Activated naive CD4-positive, alpha-beta T cell treated with anti-CD3 and anti-CD28 coated beads for 36 hours (primary cell): ENCODE measurements at regions of chr9 and their contacts with region 1.

Region 1: GRCh38 chr9:23731353-23731752 is 94.7 kb downstream of the ELAVL2 start:
- DNase-seq: no peak
- H3K4me3 Mint-ChIP-seq: no peak overlapping the region
- H3K27ac Mint-ChIP-seq: no peak overlapping the region
- H3K4me1 Mint-ChIP-seq: no peaks in the 10 kb centered on the region
- H3K27me3 Mint-ChIP-seq: no peaks in the 10 kb centered on the region

Region 2: GRCh38 chr9:23674016-23674585 is 57.3 kb before region 1 on chr9:
- CTCF ChIA-PET with region 1: no interaction called
- intact Hi-C with region 1: loop called (anchors 10 kb)
- DNase-seq: no peak
- H3K4me3 Mint-ChIP-seq: no peak overlapping the region
- H3K27ac Mint-ChIP-seq: no peak overlapping the region
- H3K4me1 Mint-ChIP-seq: no peaks in the 10 kb centered on the region
- H3K27me3 Mint-ChIP-seq: no peaks in the 10 kb centered on the region